ENCODE measurements at regions of chr19 and their contacts with region 1.

Region 1: DNA sequence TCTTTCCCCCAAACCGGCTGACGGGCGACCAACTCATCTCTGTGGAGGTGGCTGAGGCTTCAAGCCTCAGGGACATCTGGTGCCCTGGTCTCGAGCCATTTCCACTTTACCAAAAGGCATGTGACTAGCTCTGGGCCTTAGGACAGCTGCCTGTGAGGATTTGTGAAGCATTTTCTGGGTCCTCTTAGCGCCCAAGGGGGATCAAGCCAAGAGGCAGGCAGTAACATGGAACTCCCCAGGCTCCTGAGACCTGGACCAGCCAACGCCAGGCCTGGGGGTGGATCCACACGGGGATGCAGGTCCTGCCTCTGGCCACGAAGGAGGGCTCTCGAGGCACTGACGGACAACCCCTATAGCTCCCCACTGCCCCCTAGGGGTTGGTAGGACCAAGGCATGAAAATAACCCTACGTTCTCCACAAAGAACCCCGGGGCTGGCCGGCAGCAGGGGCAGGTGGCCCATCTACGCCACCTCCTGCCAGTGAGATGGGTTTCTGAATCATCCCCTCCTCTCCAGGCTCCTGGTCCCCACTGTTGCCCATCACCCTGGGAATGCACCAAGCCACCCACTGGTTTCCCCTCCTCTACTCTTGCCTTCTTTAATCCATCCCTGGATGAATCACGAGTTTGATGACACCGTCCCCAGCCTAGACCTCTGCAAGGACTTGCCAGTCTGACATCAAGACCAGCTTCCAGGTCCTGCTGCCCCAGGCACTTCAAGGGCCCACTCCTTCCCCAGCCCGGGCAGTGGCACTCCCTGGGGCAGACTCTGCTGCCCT is 7.0 kb upstream of the MYDGF start:
- DNase-seq: no peak
- H3K4me3 ChIP-seq: no peak overlapping the region
- H3K27ac ChIP-seq: peak overlapping the region; percentile 21 to 66
- H3K4me1 ChIP-seq: no peaks in the 10 kb centered on the region
- H3K27me3 ChIP-seq: no peaks in the 10 kb centered on the region
- CTCF ChIP-seq: peak in 1 of 3 donors; percentile 27
- POLR2A ChIP-seq: no peak

Region 2: GRCh38 chr19:4715529-4716221 is 38.5 kb after region 1 on chr19:
- intact Hi-C with region 1: loop called (anchors 1 kb)
- DNase-seq: peak in 1 of 2 donors; percentile 67
- H3K4me3 ChIP-seq: no peak overlapping the region
- H3K27ac ChIP-seq: peak overlapping the region; percentile 54 to 94
- H3K4me1 ChIP-seq: peaks cover 9 to 23% of the 10 kb centered on the region in 2 donors
- H3K27me3 ChIP-seq: no peaks in the 10 kb centered on the region
- CTCF ChIP-seq: no peak
- POLR2A ChIP-seq: no peak